CD4-positive, alpha-beta memory T cell (primary cell): ENCODE measurements at regions of chr4 and their contacts with region 1.

Region 1: GRCh38 chr4:148441986-148442831 is at the start of gene NR3C2:
- DNase-seq: peak; percentile 96 to 100 (median 98)
- H3K4me3 ChIP-seq: peak within 1 kb of the TSS; percentile 82 to 97
- H3K4me3 Mint-ChIP-seq: peak within 1 kb of the TSS; percentile 99 to 100 (median 100)
- H3K27ac ChIP-seq: peak within 1 kb of the TSS; percentile 92
- H3K27ac Mint-ChIP-seq: peak within 1 kb of the TSS; percentile 98 to 99 (median 99)
- H3K4me1 ChIP-seq: peaks cover 53% of the 10 kb centered on the region
- H3K4me1 Mint-ChIP-seq: peaks cover 45 to 72% (median 52%) of the 10 kb centered on the region in 4 donors
- H3K27me3 ChIP-seq: no peaks in the 10 kb centered on the region
- H3K27me3 Mint-ChIP-seq: no peaks in the 10 kb centered on the region
- total RNA-seq, gene NR3C2: 46.0 to 50.9 TPM

Region 2: GRCh38 chr4:147617173-147617840 is 824.9 kb before region 1 on chr4 and contains the start of gene TMEM184C:
- CTCF ChIA-PET with region 1: no interaction called
- POLR2A ChIA-PET with region 1: interaction called, 28 read pairs
- intact Hi-C with region 1: loop called (anchors 5 kb)
- DNase-seq: peak; percentile 97 to 98 (median 98)
- H3K4me3 ChIP-seq: peak within 1 kb of the TSS; percentile 82 to 99
- H3K4me3 Mint-ChIP-seq: peak within 1 kb of the TSS; percentile 92 to 98 (median 96)
- H3K27ac ChIP-seq: peak within 1 kb of the TSS; percentile 93
- H3K27ac Mint-ChIP-seq: peak within 1 kb of the TSS; percentile 96 to 99 (median 97)
- H3K4me1 ChIP-seq: peaks cover 49% of the 10 kb centered on the region
- H3K4me1 Mint-ChIP-seq: peaks cover 22 to 51% (median 36%) of the 10 kb centered on the region in 4 donors
- H3K27me3 ChIP-seq: no peaks in the 10 kb centered on the region
- H3K27me3 Mint-ChIP-seq: peaks cover 0 to 1% of the 10 kb centered on the region in 2 donors
- total RNA-seq, gene TMEM184C: 28.8 to 31.5 TPM

Region 3: GRCh38 chr4:147731580-147732517 is 710.4 kb before region 1 on chr4 and contains the start of gene ARHGAP10:
- CTCF ChIA-PET with region 1: interaction called, 3 read pairs
- POLR2A ChIA-PET with region 1: interaction called, 18 read pairs
- intact Hi-C with region 1: loop called (anchors 2 kb)
- DNase-seq: peak; percentile 57 to 79 (median 65)
- H3K4me3 ChIP-seq: peak within 1 kb of the TSS; percentile 76 to 84
- H3K4me3 Mint-ChIP-seq: peak within 1 kb of the TSS; percentile 90 to 97 (median 93)
- H3K27ac ChIP-seq: peak within 1 kb of the TSS; percentile 57
- H3K27ac Mint-ChIP-seq: peak within 1 kb of the TSS; percentile 91 to 97 (median 94)
- H3K4me1 ChIP-seq: peaks cover 26% of the 10 kb centered on the region
- H3K4me1 Mint-ChIP-seq: peaks cover 30 to 47% (median 42%) of the 10 kb centered on the region in 4 donors
- H3K27me3 ChIP-seq: no peaks in the 10 kb centered on the region
- H3K27me3 Mint-ChIP-seq: no peaks in the 10 kb centered on the region
- total RNA-seq, gene ARHGAP10: 8.2 to 8.3 TPM

Region 4: GRCh38 chr4:148044912-148045352 is 397.3 kb before region 1 on chr4:
- CTCF ChIA-PET with region 1: interaction called, 7 read pairs
- POLR2A ChIA-PET with region 1: interaction called, 129 read pairs
- intact Hi-C with region 1: no loop called
- DNase-seq: peak in 3 of 5 donors; percentile 30 to 35 (median 31)
- H3K4me3 ChIP-seq: no peak overlapping the region
- H3K4me3 Mint-ChIP-seq: no peak overlapping the region
- H3K27ac ChIP-seq: no peak overlapping the region
- H3K27ac Mint-ChIP-seq: peak overlapping the region in 3 of 7 donors; percentile 54 to 78 (median 63)
- H3K4me1 ChIP-seq: peaks cover 17% of the 10 kb centered on the region
- H3K4me1 Mint-ChIP-seq: peaks cover 12 to 39% (median 22%) of the 10 kb centered on the region in 4 donors
- H3K27me3 ChIP-seq: no peaks in the 10 kb centered on the region
- H3K27me3 Mint-ChIP-seq: no peaks in the 10 kb centered on the region

Region 5: DNA sequence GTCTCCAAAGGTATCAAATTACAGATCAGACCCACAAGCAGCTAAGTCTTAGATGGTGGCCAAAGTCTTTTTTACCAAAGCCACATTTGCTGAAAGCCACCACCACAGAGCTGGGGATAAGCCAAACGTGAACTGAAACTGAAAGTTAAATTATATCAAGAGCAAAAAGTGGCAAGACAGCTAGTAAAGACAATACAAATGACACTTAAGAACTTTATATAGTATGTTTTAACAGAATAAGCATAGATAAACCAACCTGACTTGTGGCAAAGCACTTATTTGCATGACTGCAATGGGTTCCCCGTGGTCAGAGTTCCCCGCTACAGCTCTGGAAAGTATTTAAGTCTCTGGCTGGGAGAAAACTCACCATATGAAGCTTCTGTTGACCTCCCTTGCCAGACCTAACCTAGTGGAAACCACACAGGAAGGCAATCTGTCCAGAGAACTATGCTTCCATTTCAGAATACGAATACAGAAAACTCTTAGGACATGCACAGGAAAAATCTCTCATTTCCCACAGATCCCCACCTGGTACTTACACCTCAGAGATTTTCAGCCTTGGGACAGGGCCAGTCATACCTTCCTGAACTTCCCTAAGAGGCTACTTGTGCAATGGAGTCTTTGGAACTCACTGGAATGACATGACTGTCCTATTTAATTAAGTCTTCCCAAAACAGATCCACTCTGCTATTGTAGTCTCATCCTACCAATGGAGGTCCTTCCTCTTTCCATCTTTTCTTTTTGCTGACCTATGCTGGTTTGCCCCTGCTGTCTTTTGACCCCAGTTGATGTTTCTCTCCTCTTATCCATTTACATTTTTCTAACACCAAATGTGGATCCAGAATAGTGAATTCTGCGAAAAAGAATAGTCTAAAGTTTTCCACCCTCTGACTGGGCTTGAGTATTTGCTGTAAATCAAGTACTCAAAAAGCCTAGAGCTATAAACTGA is 225.1 kb before region 1 on chr4:
- CTCF ChIA-PET with region 1: no interaction called
- POLR2A ChIA-PET with region 1: interaction called, 16 read pairs
- intact Hi-C with region 1: no loop called
- DNase-seq: peak; percentile 31 to 59 (median 45)
- H3K4me3 ChIP-seq: peak overlapping the region; percentile 12
- H3K4me3 Mint-ChIP-seq: peak overlapping the region; percentile 72 to 94 (median 74)
- H3K27ac ChIP-seq: peak overlapping the region; percentile 47
- H3K27ac Mint-ChIP-seq: peak overlapping the region; percentile 66 to 95 (median 80)
- H3K4me1 ChIP-seq: peaks cover 25% of the 10 kb centered on the region
- H3K4me1 Mint-ChIP-seq: peaks cover 25 to 44% (median 30%) of the 10 kb centered on the region in 4 donors
- H3K27me3 ChIP-seq: no peaks in the 10 kb centered on the region
- H3K27me3 Mint-ChIP-seq: no peaks in the 10 kb centered on the region

Region 6: DNA sequence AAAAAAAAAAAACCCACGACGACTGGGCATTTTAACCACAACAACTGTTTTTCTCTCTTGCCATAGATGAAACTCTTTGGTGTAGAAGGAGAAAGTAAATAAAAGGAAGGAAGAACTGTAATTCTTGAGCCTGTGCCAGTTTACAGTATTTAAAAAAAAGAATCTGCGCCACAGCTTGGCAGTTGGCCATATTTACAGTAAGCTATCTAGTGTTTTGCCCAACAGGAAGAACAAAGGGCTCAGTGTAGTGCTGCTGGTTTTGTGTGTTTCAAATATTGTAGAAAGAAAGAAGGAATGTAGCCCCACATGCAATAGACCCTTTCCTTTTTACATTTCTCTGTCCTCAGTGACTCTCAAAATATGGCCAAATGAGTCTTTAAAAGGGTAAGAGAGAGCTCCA is 66.1 kb before region 1 on chr4:
- CTCF ChIA-PET with region 1: interaction called, 9 read pairs
- POLR2A ChIA-PET with region 1: interaction called, 69 read pairs
- intact Hi-C with region 1: loop called (anchors 1 kb)
- DNase-seq: peak; percentile 62 to 76 (median 73)
- H3K4me3 ChIP-seq: no peak overlapping the region
- H3K4me3 Mint-ChIP-seq: peak overlapping the region; percentile 67 to 89 (median 78)
- H3K27ac ChIP-seq: peak overlapping the region; percentile 38
- H3K27ac Mint-ChIP-seq: peak overlapping the region; percentile 81 to 96 (median 90)
- H3K4me1 ChIP-seq: peaks cover 23% of the 10 kb centered on the region
- H3K4me1 Mint-ChIP-seq: peaks cover 22 to 47% (median 28%) of the 10 kb centered on the region in 4 donors
- H3K27me3 ChIP-seq: no peaks in the 10 kb centered on the region
- H3K27me3 Mint-ChIP-seq: no peaks in the 10 kb centered on the region

Region 7: DNA sequence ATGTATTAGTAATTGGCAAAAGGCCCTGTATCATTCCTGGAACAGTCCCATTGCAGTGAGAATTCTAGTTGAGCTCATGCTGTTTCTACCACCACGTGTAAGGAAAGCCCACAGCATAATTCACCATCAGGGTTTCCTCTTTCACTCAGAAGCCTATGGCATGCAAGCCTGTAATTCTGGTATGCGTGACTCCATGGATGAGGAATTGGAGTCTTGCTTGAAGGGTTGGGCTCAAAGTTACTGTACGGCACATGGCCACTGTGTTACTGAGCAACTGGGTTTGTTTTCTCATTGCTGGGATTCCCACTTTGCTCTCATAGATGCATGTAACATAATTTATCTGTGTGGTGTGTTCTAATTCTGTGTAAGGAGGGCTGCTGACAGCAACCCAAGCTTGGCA is 132.3 kb after region 1 on chr4:
- CTCF ChIA-PET with region 1: no interaction called
- POLR2A ChIA-PET with region 1: no interaction called
- intact Hi-C with region 1: no loop called
- DNase-seq: no peak
- H3K4me3 ChIP-seq: no peak overlapping the region
- H3K4me3 Mint-ChIP-seq: no peak overlapping the region
- H3K27ac ChIP-seq: no peak overlapping the region
- H3K27ac Mint-ChIP-seq: no peak overlapping the region
- H3K4me1 ChIP-seq: no peaks in the 10 kb centered on the region
- H3K4me1 Mint-ChIP-seq: no peaks in the 10 kb centered on the region
- H3K27me3 ChIP-seq: no peaks in the 10 kb centered on the region
- H3K27me3 Mint-ChIP-seq: no peaks in the 10 kb centered on the region